GM10248 (cell line): ENCODE measurements at regions of chr11 and their contacts with region 1.

Region 1: DNA sequence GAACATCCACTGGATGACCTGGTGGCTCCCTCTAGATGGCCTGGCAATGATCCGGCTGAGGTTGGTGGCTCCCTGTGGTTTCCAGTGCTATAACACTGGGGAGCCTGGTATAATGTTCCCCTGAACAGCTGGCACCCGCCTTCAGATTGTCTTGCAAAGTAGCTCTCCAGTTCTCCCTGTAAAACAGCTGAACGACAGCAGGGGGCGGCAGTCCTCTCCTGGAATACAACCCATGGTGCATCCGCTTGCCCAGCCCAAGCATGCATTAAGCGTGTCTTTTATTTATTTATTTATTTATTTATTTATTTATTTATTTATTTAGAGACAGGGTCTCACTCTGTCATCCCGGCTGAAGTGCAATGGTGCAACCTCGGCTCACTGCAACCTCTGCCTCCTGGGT is 258.9 kb downstream of the BUD13 start:
- DNase-seq: peak; percentile 47
- CTCF ChIP-seq: peak; percentile 33

Region 2: DNA sequence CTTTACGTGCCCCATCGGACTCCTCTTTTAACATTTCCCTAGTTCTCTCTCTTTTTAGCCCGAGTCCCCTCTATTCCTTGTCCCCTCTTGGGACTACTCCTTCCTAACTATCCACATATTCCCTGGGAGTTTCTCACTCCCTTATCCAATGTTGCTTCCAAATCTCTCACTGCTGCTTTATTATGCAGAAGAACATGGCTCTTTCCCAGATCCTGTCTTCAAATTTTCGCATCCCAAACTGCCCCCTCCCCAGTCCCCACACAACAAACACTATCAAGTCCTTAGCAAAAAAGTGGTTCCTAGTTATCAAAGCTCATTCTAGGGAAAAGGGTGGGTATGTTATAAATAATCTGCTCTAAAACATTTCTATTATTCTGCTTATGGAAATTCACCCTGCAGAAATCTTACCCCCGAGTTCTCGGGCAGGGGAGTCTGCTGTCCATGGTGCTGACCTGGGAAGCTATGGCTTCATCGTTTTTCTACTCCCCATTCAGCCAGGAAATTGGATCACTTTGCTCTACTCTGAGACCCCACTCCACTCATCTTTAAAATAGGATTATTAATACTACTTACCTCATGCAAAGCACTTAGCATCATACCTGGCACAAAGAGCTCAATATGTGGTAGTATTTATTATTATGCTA is 134.6 kb before region 1 on chr11:
- CTCF ChIA-PET with region 1: no interaction called
- POLR2A ChIA-PET with region 1: no interaction called
- DNase-seq: no peak
- CTCF ChIP-seq: no peak

Region 3: GRCh38 chr11:116499396-116500003 is 14.4 kb before region 1 on chr11:
- CTCF ChIA-PET with region 1: interaction called, 27 read pairs
- POLR2A ChIA-PET with region 1: no interaction called
- DNase-seq: peak; percentile 75
- CTCF ChIP-seq: peak; percentile 48

Region 4: DNA sequence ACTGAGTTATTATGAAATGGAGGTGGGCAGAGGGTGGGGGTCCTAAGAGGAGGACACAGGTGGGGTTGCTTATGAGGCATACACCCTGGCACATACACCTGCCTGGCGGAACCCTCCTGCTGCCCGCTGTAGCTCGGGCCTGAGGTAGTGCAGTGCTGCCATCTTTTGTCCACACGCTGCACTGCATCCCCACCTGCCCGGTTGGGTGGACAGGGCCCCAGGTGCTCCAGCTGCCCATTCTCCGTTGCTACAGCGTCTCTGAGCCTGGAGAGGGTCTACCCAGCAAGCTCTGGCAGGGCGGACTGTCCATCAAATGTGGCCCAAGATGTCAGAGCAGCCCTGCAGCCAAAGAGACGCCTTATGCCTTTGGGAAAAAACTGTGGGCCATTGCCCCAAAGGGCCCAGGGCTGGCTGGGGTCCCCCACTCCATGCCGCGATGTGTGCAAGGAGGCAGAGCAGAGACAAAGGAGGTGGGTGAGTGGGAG is 127.7 kb after region 1 on chr11:
- CTCF ChIA-PET with region 1: interaction called, 10 read pairs
- POLR2A ChIA-PET with region 1: no interaction called
- DNase-seq: peak; percentile 71
- CTCF ChIP-seq: peak; percentile 72